ENCODE measurements at regions of chr4 and their contacts with region 1.

Region 1: DNA sequence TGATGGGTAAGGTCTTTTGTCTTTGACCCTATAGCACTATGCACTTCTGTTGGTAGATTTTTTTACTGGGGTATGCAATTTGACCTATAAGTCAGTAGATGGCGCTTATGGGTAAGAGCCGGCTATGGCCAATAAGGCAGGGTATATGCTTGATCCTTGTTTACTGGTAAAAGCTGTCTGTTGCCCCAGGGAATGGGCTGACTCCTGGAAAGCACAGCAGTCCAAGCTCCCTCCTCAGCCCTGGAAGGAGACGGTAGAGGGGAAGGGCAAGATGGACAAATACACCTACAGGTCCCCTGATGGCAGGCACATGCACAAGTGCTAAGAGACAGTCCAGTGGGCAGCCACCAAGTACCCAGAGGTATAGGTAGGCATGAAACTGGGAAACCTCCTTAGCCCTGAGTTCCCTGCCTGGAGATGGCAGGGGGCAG is 63.7 kb downstream of the ADAMTS3 start:
- DNase-seq: peak; percentile 73
- ATAC-seq: peak; percentile 90
- H3K4me3 ChIP-seq: no peak overlapping the region
- H3K27ac ChIP-seq: no peak overlapping the region
- H3K4me1 ChIP-seq: no peaks in the 10 kb centered on the region; the same call in 1 of the 2 replicates
- H3K27me3 ChIP-seq: no peaks in the 10 kb centered on the region
- CTCF ChIP-seq: peak; percentile 94

Region 2: GRCh38 chr4:72567821-72568675 is 62.7 kb after region 1 on chr4:
- CTCF ChIA-PET with region 1: interaction called, 5 read pairs
- POLR2A ChIA-PET with region 1: no interaction called
- intact Hi-C with region 1: loop called (anchors 2 kb)
- DNase-seq: peak; percentile 96
- ATAC-seq: peak; percentile 76
- H3K4me3 ChIP-seq: peak overlapping the region; percentile 92
- H3K27ac ChIP-seq: peak overlapping the region; percentile 77
- H3K4me1 ChIP-seq: peaks cover 36% of the 10 kb centered on the region
- H3K27me3 ChIP-seq: no peaks in the 10 kb centered on the region
- CTCF ChIP-seq: peak; percentile 66

Region 3: DNA sequence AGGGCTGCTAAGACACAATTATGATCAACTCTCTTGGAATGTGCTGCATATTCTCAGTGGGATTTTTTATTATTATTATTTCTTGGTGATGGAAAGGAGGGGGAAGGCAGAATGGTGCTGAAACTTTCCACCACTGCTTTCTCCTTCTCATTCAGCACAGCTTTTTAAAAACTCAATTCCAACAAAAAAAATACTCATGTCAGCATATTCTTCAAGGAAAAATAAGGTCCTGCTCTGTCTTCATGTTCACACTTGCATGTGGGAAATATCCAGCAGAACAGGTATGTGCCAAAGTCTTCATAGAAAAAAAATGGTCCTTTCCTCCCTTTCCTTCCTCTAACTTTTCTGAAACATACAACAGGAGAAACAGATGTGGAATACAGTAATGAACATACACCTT is 207.7 kb after region 1 on chr4:
- CTCF ChIA-PET with region 1: no interaction called
- POLR2A ChIA-PET with region 1: no interaction called
- intact Hi-C with region 1: no loop called
- DNase-seq: no peak
- ATAC-seq: no peak
- H3K4me3 ChIP-seq: no peak overlapping the region
- H3K27ac ChIP-seq: no peak overlapping the region
- H3K4me1 ChIP-seq: no peaks in the 10 kb centered on the region
- H3K27me3 ChIP-seq: peaks cover 38% of the 10 kb centered on the region
- CTCF ChIP-seq: no peak

Region 4: DNA sequence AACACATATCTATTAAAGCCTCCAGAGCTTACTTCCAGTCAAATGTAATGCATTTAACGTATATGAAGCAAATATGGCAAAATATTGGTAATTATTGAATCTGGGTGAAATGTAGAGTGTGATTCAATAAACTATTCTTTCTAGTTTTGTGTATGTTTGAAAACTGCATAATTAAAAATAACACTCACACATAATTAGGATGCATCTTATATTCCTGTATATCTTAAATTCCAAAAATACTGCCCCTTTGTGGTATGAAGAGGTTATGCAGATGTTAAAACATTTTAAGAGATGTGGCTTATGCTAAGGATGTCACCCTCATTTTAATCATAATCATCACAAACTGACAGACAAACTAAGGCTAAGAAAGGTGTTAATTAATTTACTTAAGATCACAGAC is 381.3 kb after region 1 on chr4:
- CTCF ChIA-PET with region 1: interaction called, 4 read pairs
- POLR2A ChIA-PET with region 1: no interaction called
- intact Hi-C with region 1: loop called (anchors 1 kb)
- DNase-seq: peak; percentile 50
- ATAC-seq: no peak
- H3K4me3 ChIP-seq: no peak overlapping the region
- H3K27ac ChIP-seq: no peak overlapping the region
- H3K4me1 ChIP-seq: no peaks in the 10 kb centered on the region
- H3K27me3 ChIP-seq: no peaks in the 10 kb centered on the region
- CTCF ChIP-seq: peak; percentile 90

Region 5: DNA sequence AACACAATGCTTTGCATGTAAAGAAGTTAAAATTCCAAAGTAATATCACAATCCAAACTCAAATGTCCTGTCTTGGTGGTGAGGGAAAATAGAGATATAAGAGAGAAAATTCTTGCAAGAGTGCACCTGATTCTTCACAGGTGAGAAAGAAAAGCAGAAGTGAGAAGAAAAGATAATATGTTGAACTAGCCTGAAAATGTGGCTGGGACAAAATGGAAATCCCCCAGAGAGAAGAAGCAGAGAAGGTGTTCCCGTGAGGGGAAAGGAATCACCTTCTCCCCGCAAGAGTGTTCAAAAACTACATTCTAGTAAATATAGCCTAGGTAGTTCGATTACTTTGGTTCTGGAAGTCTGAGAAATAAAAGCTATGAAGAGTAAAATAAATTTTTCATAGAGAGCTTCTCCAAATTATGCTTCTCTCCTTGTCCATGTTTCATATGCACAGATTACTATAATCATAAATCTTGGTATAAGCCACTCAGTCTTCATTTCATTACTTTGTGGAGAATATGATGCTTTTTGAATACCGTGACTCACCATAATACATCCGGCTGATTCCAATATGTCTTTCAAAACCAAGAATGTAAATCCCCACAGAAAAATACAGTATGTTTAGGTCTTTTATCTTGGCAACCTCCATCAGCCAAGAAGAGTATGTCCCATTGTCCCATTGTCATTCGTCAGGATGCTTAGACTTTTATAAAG is 501.1 kb after region 1 on chr4:
- CTCF ChIA-PET with region 1: no interaction called
- POLR2A ChIA-PET with region 1: no interaction called
- intact Hi-C with region 1: no loop called
- DNase-seq: no peak
- ATAC-seq: no peak
- H3K4me3 ChIP-seq: no peak overlapping the region
- H3K27ac ChIP-seq: no peak overlapping the region
- H3K4me1 ChIP-seq: no peaks in the 10 kb centered on the region
- H3K27me3 ChIP-seq: peaks cover 5% of the 10 kb centered on the region
- CTCF ChIP-seq: no peak

Region 6: DNA sequence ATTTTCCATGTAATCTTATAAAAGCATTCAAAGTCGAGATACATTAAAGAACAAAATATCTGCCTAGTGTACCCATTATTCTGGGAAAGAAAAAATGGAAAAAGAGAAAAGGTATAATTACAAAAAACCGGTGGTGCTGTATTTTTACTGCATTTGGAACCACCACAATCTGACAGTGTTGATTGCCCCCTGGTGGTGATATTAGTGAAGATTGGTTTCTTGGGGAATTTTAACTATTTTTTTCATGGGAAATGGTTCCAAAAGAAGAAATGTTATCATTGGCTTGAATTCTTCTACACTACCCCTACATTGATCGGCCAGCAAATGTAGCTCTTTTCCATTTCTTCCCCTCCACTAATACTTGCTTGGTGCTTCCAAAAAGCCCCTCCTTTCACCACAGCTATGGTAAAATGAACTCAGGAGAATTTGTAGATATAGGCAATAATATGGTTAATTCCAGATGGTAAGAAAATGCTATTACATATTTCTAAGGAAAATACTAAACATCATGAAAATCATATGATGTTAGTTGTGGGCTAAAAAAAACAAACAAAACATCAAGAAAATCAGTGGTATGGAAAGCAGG is 514.2 kb after region 1 on chr4:
- CTCF ChIA-PET with region 1: no interaction called
- POLR2A ChIA-PET with region 1: no interaction called
- intact Hi-C with region 1: loop called (anchors 1 kb)
- DNase-seq: peak; percentile 78
- ATAC-seq: no peak
- H3K4me3 ChIP-seq: no peak overlapping the region
- H3K27ac ChIP-seq: no peak overlapping the region
- H3K4me1 ChIP-seq: no peaks in the 10 kb centered on the region
- H3K27me3 ChIP-seq: peaks cover 11% of the 10 kb centered on the region
- CTCF ChIP-seq: peak; percentile 95